Heart left ventricle (tissue), 16 donors: ENCODE measurements at regions of chr4 and their contacts with region 1.

Region 1: DNA sequence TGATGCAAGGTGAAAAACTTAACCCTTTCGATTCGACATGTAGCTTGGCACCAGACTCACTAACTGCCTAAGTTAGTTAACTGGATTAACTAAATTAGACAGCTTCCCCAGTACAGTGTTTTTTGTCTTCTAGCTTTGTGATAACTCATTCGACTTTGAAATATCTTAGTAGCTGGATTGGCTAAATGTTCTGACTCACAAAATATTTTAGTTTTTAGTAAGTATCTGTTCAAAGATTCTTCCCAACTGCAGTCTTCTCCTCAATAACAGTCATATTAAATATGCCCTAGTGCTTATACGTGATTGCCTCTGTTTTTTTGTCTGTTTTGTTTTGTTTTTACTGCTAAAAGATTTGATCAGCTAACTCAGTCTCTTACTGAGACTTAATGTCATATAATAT is 102.9 kb downstream of the KCNIP4 start:
- DNase-seq: no peak
- ATAC-seq: no peak
- H3K4me3 ChIP-seq: no peak overlapping the region
- H3K27ac ChIP-seq: no peak overlapping the region
- H3K4me1 ChIP-seq: no peaks in the 10 kb centered on the region
- H3K27me3 ChIP-seq: no peaks in the 10 kb centered on the region
- CTCF ChIP-seq: no peak
- POLR2A ChIP-seq: no peak

Region 2: GRCh38 chr4:21811565-21811964 is 34.1 kb before region 1 on chr4:
- intact Hi-C with region 1: no loop called
- DNase-seq: no peak
- ATAC-seq: no peak
- H3K4me3 ChIP-seq: no peak overlapping the region
- H3K27ac ChIP-seq: no peak overlapping the region
- H3K4me1 ChIP-seq: no peaks in the 10 kb centered on the region
- H3K27me3 ChIP-seq: no peaks in the 10 kb centered on the region
- CTCF ChIP-seq: no peak
- POLR2A ChIP-seq: no peak

Region 3: DNA sequence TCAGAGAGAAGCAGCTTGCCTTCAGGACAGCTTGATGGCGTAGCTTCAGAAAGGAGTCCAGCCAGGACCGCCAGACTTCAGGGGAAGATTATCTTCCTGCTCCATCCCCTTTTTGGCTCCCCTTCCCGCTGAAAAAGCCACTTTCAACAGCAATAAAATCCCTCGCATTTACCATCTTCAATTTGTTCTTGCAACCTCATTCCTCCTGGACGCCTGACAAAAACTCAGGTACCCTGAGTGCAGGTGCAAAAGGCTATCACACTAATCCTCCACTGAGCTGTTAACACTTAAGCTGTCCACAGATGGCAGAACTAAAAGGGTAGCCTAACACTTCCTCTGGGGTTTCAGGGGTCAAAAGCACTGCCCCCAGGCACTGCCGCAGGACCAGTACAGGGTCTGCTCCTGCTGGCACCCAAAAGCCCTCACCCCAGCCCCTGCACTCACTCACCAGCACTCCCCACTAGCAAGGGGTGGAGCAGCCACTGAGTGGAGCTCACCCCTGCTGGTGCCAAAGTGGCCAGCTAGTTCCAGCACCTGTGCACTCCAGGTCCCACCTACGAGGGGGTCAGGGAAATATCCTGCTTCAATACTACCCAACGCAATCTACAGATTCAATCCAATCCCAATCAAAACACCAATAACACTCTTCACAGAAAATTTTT is 524.4 kb after region 1 on chr4:
- intact Hi-C with region 1: loop called in 1 of 10 experiments (anchors 5 kb)
- DNase-seq: no peak
- ATAC-seq: no peak
- H3K4me3 ChIP-seq: no peak overlapping the region
- H3K27ac ChIP-seq: no peak overlapping the region
- H3K4me1 ChIP-seq: no peaks in the 10 kb centered on the region
- H3K27me3 ChIP-seq: no peaks in the 10 kb centered on the region
- CTCF ChIP-seq: no peak
- POLR2A ChIP-seq: no peak